Adrenal gland (tissue), 19 donors: ENCODE measurements at regions of chr10 and their contacts with region 1.

Region 1: DNA sequence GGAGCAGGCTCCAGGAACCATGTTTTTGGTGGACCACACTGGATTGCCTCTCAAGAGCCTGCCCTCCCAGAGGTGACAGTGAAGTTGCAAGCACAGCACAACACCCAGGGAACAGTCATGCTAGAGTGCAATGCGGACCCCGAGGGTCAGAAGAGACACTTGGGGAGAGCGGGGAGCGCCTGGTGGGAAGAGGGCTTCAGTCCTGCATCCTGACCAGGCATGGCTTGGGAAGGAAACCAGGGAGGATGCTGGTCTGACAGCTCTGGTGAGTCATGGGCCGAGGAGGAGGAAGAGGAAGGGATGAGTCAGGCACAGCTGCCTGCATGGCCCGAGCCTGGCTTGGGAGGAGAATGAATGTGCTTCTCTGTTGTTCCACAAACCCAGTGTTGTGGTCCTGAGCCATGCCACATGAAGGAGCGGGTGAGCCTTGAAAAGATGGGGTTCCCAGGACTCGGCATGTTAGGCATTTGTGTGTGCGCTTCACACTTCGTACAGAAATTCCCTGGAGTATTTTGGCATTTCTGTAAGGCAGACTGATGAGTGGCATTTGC is 29.5 kb upstream of the ANKRD2 start:
- DNase-seq: peak; percentile 85 to 96 (median 93)
- H3K4me3 ChIP-seq: no peak overlapping the region
- H3K27ac ChIP-seq: peak overlapping the region; percentile 43 to 93 (median 84)
- H3K4me1 ChIP-seq: peaks cover 12 to 22% of the 10 kb centered on the region in 2 donors
- H3K27me3 ChIP-seq: no peaks in the 10 kb centered on the region
- CTCF ChIP-seq: no peak
- POLR2A ChIP-seq: no peak

Region 2: DNA sequence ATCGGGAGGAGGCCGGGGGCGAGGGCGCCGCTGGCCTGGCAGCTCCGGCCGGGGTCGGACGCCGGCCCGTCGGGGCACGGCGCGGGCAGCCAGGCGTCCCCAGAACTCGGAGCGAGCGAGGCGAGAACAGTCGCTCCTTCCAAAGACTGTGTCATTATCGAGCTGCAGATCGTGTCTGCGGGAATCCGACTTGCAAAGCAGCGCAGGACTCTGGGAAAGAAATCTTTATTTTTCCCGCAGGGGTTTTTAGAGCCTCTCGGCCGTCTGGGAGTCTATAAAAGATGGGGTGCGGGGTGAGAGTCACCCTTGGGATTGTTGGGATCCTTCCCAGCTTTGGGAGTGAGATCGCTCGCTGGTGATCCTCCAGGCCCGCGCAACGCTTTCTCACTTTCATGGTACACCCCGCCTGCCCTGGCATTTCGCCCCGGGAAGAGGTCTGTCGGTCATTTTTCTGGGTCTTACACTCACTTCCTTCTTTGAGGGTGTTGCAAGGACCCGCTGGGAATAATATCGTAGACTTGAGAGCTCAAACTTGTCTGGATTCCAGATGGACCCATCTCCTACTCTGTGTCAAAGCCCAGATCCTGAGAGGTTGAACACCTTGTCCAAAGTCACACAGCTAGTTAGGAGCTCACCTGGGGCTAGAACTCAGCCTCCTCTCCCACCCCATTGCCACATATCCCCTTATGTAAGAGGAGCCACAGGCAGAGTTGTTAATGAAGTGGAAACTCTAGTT is 43.4 kb before region 1 on chr10:
- intact Hi-C with region 1: loop called in 1 of 2 experiments (anchors 5 kb)
- DNase-seq: peak; percentile 61 to 85 (median 74)
- H3K4me3 ChIP-seq: peak overlapping the region; percentile 27 to 92 (median 77)
- H3K27ac ChIP-seq: peak overlapping the region in 4 of 5 donors; percentile 82 to 93 (median 89)
- H3K4me1 ChIP-seq: peaks cover 10 to 37% of the 10 kb centered on the region in 2 donors
- H3K27me3 ChIP-seq: no peaks in the 10 kb centered on the region
- CTCF ChIP-seq: no peak
- POLR2A ChIP-seq: peak in 1 of 2 donors; percentile 18